ENCODE measurements at regions of chr5 and their contacts with region 1.

Region 1: GRCh38 chr5:32690153-32690552 is 21.0 kb upstream of the NPR3 start:
- DNase-seq: no peak
- H3K4me3 ChIP-seq: no peak overlapping the region
- H3K27ac ChIP-seq: no peak overlapping the region
- H3K4me1 ChIP-seq: no peaks in the 10 kb centered on the region
- H3K27me3 ChIP-seq: no peaks in the 10 kb centered on the region
- CTCF ChIP-seq: peak; percentile 59; the same call in 1 of the 2 replicates

Region 2: DNA sequence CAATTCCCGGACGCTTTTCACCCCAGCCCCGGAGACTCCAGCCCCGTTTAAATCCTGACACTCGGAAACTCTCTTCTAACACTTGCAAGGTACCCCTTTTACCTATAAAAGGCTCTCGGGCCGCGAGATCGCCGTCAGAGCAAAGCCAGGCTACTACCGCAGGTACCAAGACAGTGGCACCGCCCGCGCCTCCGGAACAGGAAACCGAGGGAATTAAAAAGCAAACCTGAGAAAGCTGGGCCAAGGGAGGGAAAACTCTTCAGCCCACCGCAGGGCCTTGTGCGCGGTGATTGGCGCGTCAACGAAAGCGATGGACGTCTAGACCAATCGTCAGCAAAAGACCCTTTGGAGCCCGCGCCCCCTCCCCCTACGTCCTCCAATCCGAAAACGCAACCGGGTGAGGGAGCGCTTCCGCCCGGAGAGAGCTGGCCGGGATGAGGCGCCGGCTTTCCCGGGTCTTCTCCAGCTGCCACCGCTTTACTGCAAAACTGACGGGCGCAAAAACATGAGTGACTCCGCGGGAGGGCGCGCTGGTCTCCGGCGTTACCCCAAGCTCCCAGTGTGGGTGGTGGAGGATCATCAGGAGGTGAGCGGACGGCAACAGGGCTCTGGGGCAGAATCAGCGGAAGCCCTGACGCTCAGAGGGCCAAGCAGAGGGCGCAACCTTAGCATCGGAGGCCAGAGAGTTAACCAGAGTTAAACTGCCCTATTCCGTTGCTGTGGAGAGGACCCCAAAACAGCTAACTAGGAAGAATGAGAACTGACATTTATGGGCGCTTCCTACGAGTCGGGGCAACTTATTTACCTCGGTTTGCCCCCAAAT is 1158.1 kb before region 1 on chr5 and contains the starts of genes C5orf22 and DROSHA:
- CTCF ChIA-PET with region 1: no interaction called
- POLR2A ChIA-PET with region 1: no interaction called
- intact Hi-C with region 1: no loop called
- DNase-seq: peak; percentile 98 to 100
- H3K4me3 ChIP-seq: peak within 1 kb of the TSS; percentile 92
- H3K27ac ChIP-seq: peak within 1 kb of the TSS; percentile 35
- H3K4me1 ChIP-seq: peaks cover 28% of the 10 kb centered on the region
- H3K27me3 ChIP-seq: no peaks in the 10 kb centered on the region
- CTCF ChIP-seq: no peak; the same call in 1 of the 2 replicates
- total RNA-seq, gene C5orf22: 35.2 and 46.7 TPM in 2 replicates
- total RNA-seq, gene DROSHA: 154 and 162 TPM in 2 replicates

Region 3: DNA sequence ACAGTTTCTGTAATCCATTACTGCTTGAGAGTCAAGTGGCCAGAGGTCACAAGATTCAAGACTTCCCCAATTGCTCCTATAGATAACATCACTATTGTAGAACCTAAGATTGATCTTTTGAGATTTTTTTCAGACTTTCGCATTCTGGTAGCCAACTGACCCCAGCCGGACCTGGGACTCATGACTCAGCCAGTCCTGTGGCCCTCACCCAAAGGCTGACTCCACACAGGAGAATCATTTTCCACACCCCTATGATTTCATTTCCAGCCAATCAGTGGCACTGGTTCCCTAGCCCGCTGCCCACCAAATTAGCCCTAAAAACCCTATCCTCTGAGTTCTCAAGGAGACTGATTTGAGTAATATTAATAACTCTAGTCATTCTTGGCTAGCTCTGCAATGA is 786.8 kb after region 1 on chr5:
- CTCF ChIA-PET with region 1: interaction called, 14 read pairs
- POLR2A ChIA-PET with region 1: no interaction called
- intact Hi-C with region 1: no loop called
- DNase-seq: no peak
- H3K4me3 ChIP-seq: no peak overlapping the region
- H3K27ac ChIP-seq: no peak overlapping the region
- H3K4me1 ChIP-seq: no peaks in the 10 kb centered on the region
- H3K27me3 ChIP-seq: no peaks in the 10 kb centered on the region
- CTCF ChIP-seq: no peak

Measured in PC-9 (cell line).